ENCODE measurements at regions of chr15 and their contacts with region 1.

Region 1: DNA sequence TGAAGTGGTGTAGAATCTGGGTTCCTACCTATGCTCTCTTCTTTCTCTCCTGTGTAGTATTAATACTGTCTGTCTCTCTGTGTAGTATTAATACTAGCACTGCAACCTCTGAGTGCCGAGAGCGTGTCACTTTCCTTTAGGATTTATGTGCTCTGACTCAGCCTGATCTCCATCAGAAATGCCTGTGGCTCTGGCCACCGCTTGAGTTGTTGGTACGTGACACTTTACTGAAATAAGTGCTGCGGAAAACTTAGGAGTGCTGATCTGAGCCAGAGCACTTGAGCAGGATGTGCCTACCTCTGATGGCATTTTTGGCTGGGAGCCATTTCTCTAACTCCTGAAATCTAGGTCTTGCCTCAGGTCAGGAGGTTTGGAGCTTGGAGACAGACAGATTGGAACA is 807.4 kb downstream of the SQOR start:
- DNase-seq: no peak
- ATAC-seq: no peak
- H3K4me3 ChIP-seq: no peak overlapping the region
- H3K27ac ChIP-seq: no peak overlapping the region
- H3K4me1 ChIP-seq: no peaks in the 10 kb centered on the region
- H3K27me3 ChIP-seq: no peaks in the 10 kb centered on the region
- CTCF ChIP-seq: no peak
- POLR2A ChIP-seq: no peak

Region 2: GRCh38 chr15:46344115-46344724 is 98.0 kb before region 1 on chr15:
- in situ Hi-C with region 1: loop called in 1 of 4 experiments (anchors 25 kb)
- intact Hi-C with region 1: no loop called
- DNase-seq: no peak
- ATAC-seq: no peak
- H3K4me3 ChIP-seq: no peak overlapping the region
- H3K27ac ChIP-seq: no peak overlapping the region
- H3K4me1 ChIP-seq: no peaks in the 10 kb centered on the region
- H3K27me3 ChIP-seq: no peaks in the 10 kb centered on the region
- CTCF ChIP-seq: no peak
- POLR2A ChIP-seq: no peak

Region 3: DNA sequence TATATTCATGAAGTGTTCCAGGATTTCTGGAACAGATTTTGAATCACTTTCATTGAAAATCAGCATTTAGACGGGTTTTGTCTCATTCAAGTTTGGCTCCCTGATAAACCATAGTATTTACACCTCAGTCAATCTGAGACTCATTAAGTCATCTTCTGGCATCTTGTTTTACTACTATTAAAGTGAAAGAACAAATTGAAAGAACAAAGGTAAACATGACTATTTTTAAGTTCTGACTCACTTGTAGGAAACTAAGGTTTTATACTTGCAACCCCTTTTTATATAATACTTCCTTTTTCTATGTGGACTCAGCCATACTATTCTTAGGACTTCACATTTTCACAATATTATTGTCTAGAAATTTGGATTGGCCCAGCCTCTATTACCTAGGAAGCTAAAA is 47.1 kb after region 1 on chr15:
- in situ Hi-C with region 1: no loop called
- intact Hi-C with region 1: loop called (anchors 2 kb)
- DNase-seq: no peak
- ATAC-seq: no peak
- H3K4me3 ChIP-seq: no peak overlapping the region
- H3K27ac ChIP-seq: no peak overlapping the region
- H3K4me1 ChIP-seq: no peaks in the 10 kb centered on the region
- H3K27me3 ChIP-seq: no peaks in the 10 kb centered on the region
- CTCF ChIP-seq: no peak
- POLR2A ChIP-seq: no peak

Region 4: DNA sequence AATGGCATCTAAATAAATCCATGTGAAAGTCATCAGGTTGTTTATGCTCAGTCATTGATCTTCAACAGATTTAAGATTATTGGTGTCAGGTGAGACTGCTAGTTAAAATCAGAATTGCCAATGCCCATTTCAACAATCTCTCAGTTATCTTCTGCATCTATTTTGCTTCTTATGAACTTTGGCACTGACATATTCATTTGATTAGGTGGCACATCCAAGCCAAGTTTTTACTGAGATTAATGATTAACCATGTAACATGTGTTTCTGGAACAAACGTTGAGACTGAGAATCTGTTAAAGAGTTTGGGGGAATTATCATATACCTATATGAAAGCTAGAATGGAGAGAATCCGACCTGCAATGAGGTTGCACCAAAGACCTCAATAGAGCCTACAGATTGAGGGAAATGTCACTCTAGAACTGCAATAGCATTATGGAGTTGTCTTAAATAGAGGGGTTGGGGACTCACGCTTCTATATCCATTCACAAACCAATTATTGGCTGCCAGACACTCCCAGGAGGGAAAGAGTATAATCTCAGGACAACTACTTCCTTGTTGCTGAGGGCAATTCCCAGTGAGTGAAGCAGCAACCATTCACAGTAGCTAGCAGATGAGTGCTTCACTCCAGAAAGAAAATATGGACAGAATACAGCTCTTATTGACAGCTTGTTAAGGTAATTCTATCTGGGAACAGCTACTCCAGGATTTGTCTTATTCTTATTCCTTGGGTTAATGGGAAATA is 84.0 kb after region 1 on chr15:
- in situ Hi-C with region 1: loop called in 1 of 4 experiments (anchors 25 kb)
- intact Hi-C with region 1: no loop called
- DNase-seq: no peak
- ATAC-seq: no peak
- H3K4me3 ChIP-seq: no peak overlapping the region
- H3K27ac ChIP-seq: no peak overlapping the region
- H3K4me1 ChIP-seq: no peaks in the 10 kb centered on the region
- H3K27me3 ChIP-seq: no peaks in the 10 kb centered on the region
- CTCF ChIP-seq: no peak
- POLR2A ChIP-seq: no peak

Measured in gastrocnemius medialis (tissue), 4 donors.